ENCODE measurements at regions of chr1 and their contacts with region 1.

Region 1: GRCh38 chr1:27556781-27557595 is 47.0 kb downstream of the AHDC1 start:
- DNase-seq: peak; percentile 62 to 85 (median 76)
- ATAC-seq: peak; percentile 96
- H3K4me3 ChIP-seq: no peak overlapping the region
- H3K4me3 Mint-ChIP-seq: peak overlapping the region; percentile 30
- H3K27ac ChIP-seq: no peak overlapping the region
- H3K27ac Mint-ChIP-seq: peak overlapping the region; percentile 58
- H3K4me1 ChIP-seq: peaks cover 24% of the 10 kb centered on the region
- H3K4me1 Mint-ChIP-seq: peaks cover 33% of the 10 kb centered on the region
- H3K27me3 ChIP-seq: no peaks in the 10 kb centered on the region
- H3K27me3 Mint-ChIP-seq: no peaks in the 10 kb centered on the region
- CTCF ChIP-seq: peak; percentile 95

Region 2: DNA sequence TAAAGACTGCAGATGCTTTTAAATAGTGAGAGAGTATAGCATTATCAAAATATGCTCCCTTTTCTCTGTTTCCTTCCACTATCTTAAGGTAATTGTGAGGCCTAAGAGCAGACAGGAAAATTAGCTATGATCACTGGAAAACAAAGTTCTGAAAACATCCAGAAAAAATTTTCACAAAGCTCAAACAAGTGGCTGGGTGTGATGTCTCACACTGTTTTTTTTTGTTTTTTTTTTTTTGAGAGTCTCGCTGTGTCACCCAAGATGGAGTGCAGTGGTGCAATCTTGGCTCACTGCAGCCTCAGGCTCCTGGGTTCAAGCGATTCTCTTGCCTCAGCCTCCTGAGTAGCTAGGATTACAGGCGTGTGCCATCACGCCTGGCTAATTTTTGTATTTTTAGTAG is 315.3 kb before region 1 on chr1:
- CTCF ChIA-PET with region 1: no interaction called
- POLR2A ChIA-PET with region 1: no interaction called
- intact Hi-C with region 1: no loop called
- DNase-seq: no peak
- ATAC-seq: no peak
- H3K4me3 ChIP-seq: no peak overlapping the region
- H3K4me3 Mint-ChIP-seq: no peak overlapping the region
- H3K27ac ChIP-seq: no peak overlapping the region
- H3K27ac Mint-ChIP-seq: no peak overlapping the region
- H3K4me1 ChIP-seq: no peaks in the 10 kb centered on the region
- H3K4me1 Mint-ChIP-seq: peaks cover 16% of the 10 kb centered on the region
- H3K27me3 ChIP-seq: no peaks in the 10 kb centered on the region
- H3K27me3 Mint-ChIP-seq: no peaks in the 10 kb centered on the region
- CTCF ChIP-seq: no peak

Region 3: DNA sequence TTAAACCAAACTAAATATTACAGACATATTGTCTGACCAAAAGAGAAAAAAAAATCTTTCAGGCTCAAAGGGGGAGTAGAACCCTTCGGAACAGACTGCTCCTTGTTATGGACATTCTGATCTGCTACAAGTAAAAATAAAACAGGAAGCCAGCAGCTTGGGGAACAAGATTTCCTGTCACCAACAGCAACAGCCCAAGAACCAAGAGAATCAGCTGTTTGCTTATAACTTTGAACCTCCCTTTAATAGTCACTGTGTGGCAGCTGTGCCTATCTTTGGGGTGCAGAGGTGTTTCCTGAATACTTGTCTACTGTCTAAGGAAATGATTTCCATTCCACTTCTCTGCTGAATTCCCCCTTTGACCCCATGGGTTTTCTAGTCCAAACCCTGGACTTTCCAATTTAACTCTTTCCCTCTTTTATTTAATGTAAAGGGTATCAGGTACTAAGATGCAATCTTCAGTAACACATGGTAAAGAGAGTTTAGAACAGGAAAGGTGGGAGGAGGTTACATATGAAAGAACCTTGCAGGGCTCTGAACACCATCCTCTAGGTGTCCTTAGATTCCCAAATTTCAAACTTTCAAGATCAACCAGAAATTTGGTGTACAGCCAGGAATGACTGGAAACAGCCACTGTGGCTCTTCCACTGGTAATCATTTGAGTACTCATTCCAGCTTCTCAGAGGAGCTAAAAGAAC is 125.9 kb before region 1 on chr1:
- CTCF ChIA-PET with region 1: interaction called, 12 read pairs
- POLR2A ChIA-PET with region 1: no interaction called
- intact Hi-C with region 1: no loop called
- DNase-seq: peak in 6 of 9 experiments; percentile 15 to 71 (median 32)
- ATAC-seq: peak; percentile 69
- H3K4me3 ChIP-seq: no peak overlapping the region
- H3K4me3 Mint-ChIP-seq: peak overlapping the region; percentile 63
- H3K27ac ChIP-seq: peak overlapping the region; percentile 18 to 57
- H3K27ac Mint-ChIP-seq: peak overlapping the region; percentile 85
- H3K4me1 ChIP-seq: peaks cover 88% of the 10 kb centered on the region
- H3K4me1 Mint-ChIP-seq: peaks cover 85% of the 10 kb centered on the region
- H3K27me3 ChIP-seq: no peaks in the 10 kb centered on the region
- H3K27me3 Mint-ChIP-seq: no peaks in the 10 kb centered on the region
- CTCF ChIP-seq: no peak

Region 4: DNA sequence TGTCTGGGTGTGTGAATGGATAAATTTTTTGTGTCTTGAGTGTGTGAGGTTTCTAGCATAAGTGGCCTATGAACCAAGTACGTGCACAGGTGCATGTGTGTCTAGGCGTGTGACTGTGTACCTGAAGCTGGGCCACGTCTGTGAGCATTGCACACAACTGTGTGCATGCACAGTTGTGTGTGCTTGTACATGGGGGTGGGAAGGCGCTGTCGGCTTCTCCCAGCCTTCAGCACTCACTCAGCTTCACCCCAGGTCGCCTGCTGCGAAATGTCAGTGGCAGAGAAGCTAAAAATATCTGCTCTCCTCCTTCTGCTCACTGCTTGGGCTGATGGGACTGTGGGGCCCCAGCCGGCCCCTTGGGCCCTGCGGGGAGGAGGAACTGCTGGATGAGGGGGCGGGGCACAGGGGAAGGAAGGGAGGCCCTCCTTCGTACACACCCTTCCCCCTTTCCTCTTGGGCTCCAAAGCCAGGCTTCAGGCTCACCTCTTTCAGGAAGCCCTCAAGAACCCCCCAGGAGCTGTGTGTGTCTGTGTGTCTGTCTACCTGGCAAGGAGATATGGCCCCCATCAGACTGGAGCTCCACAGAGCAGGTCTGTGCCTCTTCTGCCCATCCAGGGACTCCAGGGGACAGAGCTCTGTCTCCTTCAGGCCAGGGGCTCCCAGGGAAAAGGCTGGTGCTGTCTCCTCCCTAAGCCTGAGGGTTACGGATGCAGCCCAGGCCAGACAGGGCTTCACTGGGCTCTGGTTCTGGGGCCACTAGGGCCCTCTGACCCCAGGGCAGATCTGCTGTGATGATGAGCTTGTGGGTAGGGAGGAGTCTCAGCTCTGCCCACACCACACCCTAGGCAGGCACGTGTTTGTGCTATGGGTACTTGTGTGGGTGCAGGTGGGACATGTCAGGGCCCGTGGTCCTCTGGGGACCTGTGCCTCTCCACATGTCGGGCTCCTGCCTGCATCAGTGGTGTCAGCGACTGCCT is 31.4 kb before region 1 on chr1:
- CTCF ChIA-PET with region 1: interaction called, 10 read pairs
- POLR2A ChIA-PET with region 1: interaction called, 3 read pairs
- intact Hi-C with region 1: no loop called
- DNase-seq: peak in 8 of 9 experiments; percentile 25 to 74 (median 49)
- ATAC-seq: no peak
- H3K4me3 ChIP-seq: peak overlapping the region; percentile 21 to 47
- H3K4me3 Mint-ChIP-seq: peak overlapping the region; percentile 66
- H3K27ac ChIP-seq: peak overlapping the region; percentile 63 to 66
- H3K27ac Mint-ChIP-seq: peak overlapping the region; percentile 85
- H3K4me1 ChIP-seq: peaks cover 63% of the 10 kb centered on the region
- H3K4me1 Mint-ChIP-seq: peaks cover 73% of the 10 kb centered on the region
- H3K27me3 ChIP-seq: no peaks in the 10 kb centered on the region
- H3K27me3 Mint-ChIP-seq: no peaks in the 10 kb centered on the region
- CTCF ChIP-seq: no peak

Region 5: GRCh38 chr1:27568300-27569087 is 11.5 kb after region 1 on chr1:
- CTCF ChIA-PET with region 1: interaction called, 20 read pairs
- POLR2A ChIA-PET with region 1: interaction called, 4 read pairs
- intact Hi-C with region 1: loop called in 1 of 2 experiments (anchors 1 kb)
- DNase-seq: peak; percentile 80 to 96 (median 91)
- ATAC-seq: peak; percentile 92
- H3K4me3 ChIP-seq: peak overlapping the region; percentile 28 to 36
- H3K4me3 Mint-ChIP-seq: peak overlapping the region; percentile 78
- H3K27ac ChIP-seq: peak overlapping the region in 1 of 2 experiments; percentile 58
- H3K27ac Mint-ChIP-seq: peak overlapping the region; percentile 39
- H3K4me1 ChIP-seq: peaks cover 16% of the 10 kb centered on the region
- H3K4me1 Mint-ChIP-seq: peaks cover 25% of the 10 kb centered on the region
- H3K27me3 ChIP-seq: no peaks in the 10 kb centered on the region
- H3K27me3 Mint-ChIP-seq: no peaks in the 10 kb centered on the region
- CTCF ChIP-seq: peak; percentile 71

Region 6: GRCh38 chr1:27581823-27582243 is 24.8 kb after region 1 on chr1:
- CTCF ChIA-PET with region 1: interaction called, 13 read pairs
- POLR2A ChIA-PET with region 1: no interaction called
- intact Hi-C with region 1: no loop called
- DNase-seq: no peak
- ATAC-seq: no peak
- H3K4me3 ChIP-seq: no peak overlapping the region
- H3K4me3 Mint-ChIP-seq: no peak overlapping the region
- H3K27ac ChIP-seq: no peak overlapping the region
- H3K27ac Mint-ChIP-seq: no peak overlapping the region
- H3K4me1 ChIP-seq: no peaks in the 10 kb centered on the region
- H3K4me1 Mint-ChIP-seq: peaks cover 18% of the 10 kb centered on the region
- H3K27me3 ChIP-seq: no peaks in the 10 kb centered on the region
- H3K27me3 Mint-ChIP-seq: no peaks in the 10 kb centered on the region
- CTCF ChIP-seq: no peak

Region 7: GRCh38 chr1:27891196-27891889 is 334.4 kb after region 1 on chr1:
- CTCF ChIA-PET with region 1: no interaction called
- POLR2A ChIA-PET with region 1: no interaction called
- intact Hi-C with region 1: no loop called
- DNase-seq: peak in 5 of 9 experiments; percentile 31 to 80 (median 48)
- ATAC-seq: peak; percentile 45
- H3K4me3 ChIP-seq: no peak overlapping the region
- H3K4me3 Mint-ChIP-seq: peak overlapping the region; percentile 9
- H3K27ac ChIP-seq: peak overlapping the region; percentile 29 to 82
- H3K27ac Mint-ChIP-seq: peak overlapping the region; percentile 92
- H3K4me1 ChIP-seq: peaks cover 52% of the 10 kb centered on the region
- H3K4me1 Mint-ChIP-seq: peaks cover 45% of the 10 kb centered on the region
- H3K27me3 ChIP-seq: no peaks in the 10 kb centered on the region
- H3K27me3 Mint-ChIP-seq: no peaks in the 10 kb centered on the region
- CTCF ChIP-seq: no peak